CD4-positive, alpha-beta memory T cell (primary cell): ENCODE measurements at regions of chr6 and their contacts with region 1.

Region 1: GRCh38 chr6:11496152-11497060 is 41.1 kb upstream of the TMEM170B start:
- DNase-seq: peak; percentile 79 to 82 (median 80)
- H3K4me3 ChIP-seq: no peak overlapping the region
- H3K4me3 Mint-ChIP-seq: no peak overlapping the region
- H3K27ac ChIP-seq: no peak overlapping the region
- H3K27ac Mint-ChIP-seq: no peak overlapping the region
- H3K4me1 ChIP-seq: peaks cover 5% of the 10 kb centered on the region
- H3K4me1 Mint-ChIP-seq: peaks cover 0 to 1% (median 0%) of the 10 kb centered on the region in 4 donors
- H3K27me3 ChIP-seq: no peaks in the 10 kb centered on the region
- H3K27me3 Mint-ChIP-seq: no peaks in the 10 kb centered on the region

Region 2: GRCh38 chr6:11144393-11144851 is 352.0 kb before region 1 on chr6:
- CTCF ChIA-PET with region 1: interaction called, 167 read pairs
- POLR2A ChIA-PET with region 1: interaction called, 3 read pairs
- intact Hi-C with region 1: no loop called
- DNase-seq: peak; percentile 54 to 68 (median 64)
- H3K4me3 ChIP-seq: no peak overlapping the region
- H3K4me3 Mint-ChIP-seq: no peak overlapping the region
- H3K27ac ChIP-seq: no peak overlapping the region
- H3K27ac Mint-ChIP-seq: no peak overlapping the region
- H3K4me1 ChIP-seq: no peaks in the 10 kb centered on the region
- H3K4me1 Mint-ChIP-seq: peaks cover 0 to 4% (median 0%) of the 10 kb centered on the region in 4 donors
- H3K27me3 ChIP-seq: no peaks in the 10 kb centered on the region
- H3K27me3 Mint-ChIP-seq: no peaks in the 10 kb centered on the region

Region 3: GRCh38 chr6:11179419-11180202 is 316.8 kb before region 1 on chr6:
- CTCF ChIA-PET with region 1: interaction called, 218 read pairs
- POLR2A ChIA-PET with region 1: no interaction called
- intact Hi-C with region 1: no loop called
- DNase-seq: no peak
- H3K4me3 ChIP-seq: no peak overlapping the region
- H3K4me3 Mint-ChIP-seq: no peak overlapping the region
- H3K27ac ChIP-seq: no peak overlapping the region
- H3K27ac Mint-ChIP-seq: peak overlapping the region in 1 of 7 donors; percentile 26
- H3K4me1 ChIP-seq: no peaks in the 10 kb centered on the region
- H3K4me1 Mint-ChIP-seq: peaks cover 0 to 2% (median 0%) of the 10 kb centered on the region in 4 donors
- H3K27me3 ChIP-seq: no peaks in the 10 kb centered on the region
- H3K27me3 Mint-ChIP-seq: no peaks in the 10 kb centered on the region

Region 4: GRCh38 chr6:11485271-11485670 is 11.1 kb before region 1 on chr6:
- CTCF ChIA-PET with region 1: interaction called, 43 read pairs
- POLR2A ChIA-PET with region 1: no interaction called
- intact Hi-C with region 1: no loop called
- DNase-seq: no peak
- H3K4me3 ChIP-seq: no peak overlapping the region
- H3K4me3 Mint-ChIP-seq: no peak overlapping the region
- H3K27ac ChIP-seq: no peak overlapping the region
- H3K27ac Mint-ChIP-seq: no peak overlapping the region
- H3K4me1 ChIP-seq: no peaks in the 10 kb centered on the region
- H3K4me1 Mint-ChIP-seq: no peaks in the 10 kb centered on the region
- H3K27me3 ChIP-seq: no peaks in the 10 kb centered on the region
- H3K27me3 Mint-ChIP-seq: peaks cover 0 to 3% of the 10 kb centered on the region in 2 donors

Region 5: DNA sequence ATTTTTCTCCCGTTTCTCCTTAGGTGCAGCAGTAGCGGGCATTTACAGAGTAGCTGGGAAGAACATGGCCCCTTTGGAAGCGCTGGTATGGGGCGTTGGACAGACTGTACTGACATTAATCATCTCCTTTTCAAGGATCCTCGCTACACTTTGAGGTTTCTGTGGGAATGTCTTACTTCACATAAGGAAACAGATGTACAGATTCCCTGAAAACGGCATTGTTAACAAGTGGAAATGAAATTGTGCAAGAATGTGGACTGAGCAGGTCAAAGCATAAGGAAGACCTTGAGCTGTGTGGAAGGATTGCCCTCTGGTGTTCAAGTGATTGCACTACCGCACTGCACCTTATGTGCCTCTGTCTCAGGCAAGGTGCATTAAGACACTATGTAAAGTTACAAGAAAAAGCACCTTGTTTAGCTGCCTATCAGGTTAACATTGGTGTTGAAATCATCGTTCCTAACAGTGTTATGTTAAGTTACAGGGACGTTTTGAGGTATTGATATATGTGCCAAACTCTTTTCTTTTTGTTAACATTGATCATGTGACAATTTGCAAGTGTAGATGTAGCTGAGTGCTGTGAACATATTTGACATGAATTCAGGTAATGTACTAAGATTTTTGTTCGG is 79.1 kb after region 1 on chr6:
- CTCF ChIA-PET with region 1: interaction called, 22 read pairs
- POLR2A ChIA-PET with region 1: no interaction called
- intact Hi-C with region 1: loop called (anchors 1 kb)
- DNase-seq: peak in 4 of 5 donors; percentile 39 to 43 (median 40)
- H3K4me3 ChIP-seq: no peak overlapping the region
- H3K4me3 Mint-ChIP-seq: no peak overlapping the region
- H3K27ac ChIP-seq: no peak overlapping the region
- H3K27ac Mint-ChIP-seq: no peak overlapping the region
- H3K4me1 ChIP-seq: no peaks in the 10 kb centered on the region
- H3K4me1 Mint-ChIP-seq: no peaks in the 10 kb centered on the region
- H3K27me3 ChIP-seq: no peaks in the 10 kb centered on the region
- H3K27me3 Mint-ChIP-seq: no peaks in the 10 kb centered on the region

Region 6: GRCh38 chr6:11700118-11700718 is 203.8 kb after region 1 on chr6:
- CTCF ChIA-PET with region 1: no interaction called
- POLR2A ChIA-PET with region 1: no interaction called
- intact Hi-C with region 1: no loop called
- DNase-seq: peak in 3 of 5 donors; percentile 38 to 51 (median 42)
- H3K4me3 ChIP-seq: no peak overlapping the region
- H3K4me3 Mint-ChIP-seq: no peak overlapping the region
- H3K27ac ChIP-seq: no peak overlapping the region
- H3K27ac Mint-ChIP-seq: peak overlapping the region in 1 of 7 donors; percentile 41
- H3K4me1 ChIP-seq: no peaks in the 10 kb centered on the region
- H3K4me1 Mint-ChIP-seq: peaks cover 0 to 8% (median 4%) of the 10 kb centered on the region in 4 donors
- H3K27me3 ChIP-seq: no peaks in the 10 kb centered on the region
- H3K27me3 Mint-ChIP-seq: no peaks in the 10 kb centered on the region